ENCODE measurements at regions of chr13 and their contacts with region 1.

Region 1: GRCh38 chr13:46553886-46554858 is 1.2 kb downstream of the LRCH1 start:
- DNase-seq: peak; percentile 75 to 92 (median 86)
- H3K4me3 ChIP-seq: peak overlapping the region; percentile 72 to 89 (median 73)
- H3K27ac ChIP-seq: peak overlapping the region; percentile 96 to 97
- H3K4me1 ChIP-seq: peaks cover 0 to 10% (median 3%) of the 10 kb centered on the region in 3 donors
- H3K27me3 ChIP-seq: no peaks in the 10 kb centered on the region
- CTCF ChIP-seq: no peak

Region 2: DNA sequence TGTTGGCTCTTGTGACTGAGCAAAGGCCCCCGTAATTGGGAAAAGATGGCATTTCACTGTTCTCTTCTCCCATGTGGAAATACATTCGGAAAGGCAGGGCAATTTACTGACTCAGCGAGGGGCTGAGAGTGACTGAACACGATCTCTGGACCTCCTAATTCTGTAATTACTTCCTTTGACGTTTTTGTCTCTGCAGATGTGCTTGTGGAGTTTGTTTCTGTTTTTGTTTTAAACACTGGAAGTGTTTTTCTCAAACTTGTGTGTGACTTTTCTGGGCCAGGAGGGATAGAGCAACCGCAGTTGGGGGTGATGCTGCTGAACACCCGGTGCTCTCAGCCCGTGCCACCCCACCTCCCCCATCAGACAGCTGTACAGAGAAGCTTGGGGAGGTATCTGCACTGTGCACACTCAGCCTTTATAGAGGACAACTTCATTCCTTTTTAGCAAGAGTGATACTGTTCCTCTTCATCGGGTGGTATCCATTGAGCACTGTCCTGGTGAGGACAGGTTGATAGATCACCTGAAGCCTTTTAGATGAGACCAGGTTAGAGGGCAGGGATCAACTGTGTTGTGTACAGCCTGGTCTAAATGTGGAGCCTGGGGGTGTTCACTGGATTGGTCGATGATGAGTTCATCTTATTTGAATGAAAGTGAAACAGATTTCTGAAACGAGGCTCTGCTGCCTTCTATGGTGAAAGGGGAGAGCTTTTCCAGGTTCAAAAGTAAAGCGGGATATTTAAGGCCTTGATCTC is 125.4 kb after region 1 on chr13:
- intact Hi-C with region 1: loop called (anchors 10 kb)
- DNase-seq: peak in 1 of 5 donors; percentile 69
- H3K4me3 ChIP-seq: peak overlapping the region in 2 of 3 donors; percentile 60 to 62
- H3K27ac ChIP-seq: peak overlapping the region; percentile 92 to 94
- H3K4me1 ChIP-seq: peaks cover 4 to 40% (median 20%) of the 10 kb centered on the region in 3 donors
- H3K27me3 ChIP-seq: no peaks in the 10 kb centered on the region
- CTCF ChIP-seq: no peak

Region 3: DNA sequence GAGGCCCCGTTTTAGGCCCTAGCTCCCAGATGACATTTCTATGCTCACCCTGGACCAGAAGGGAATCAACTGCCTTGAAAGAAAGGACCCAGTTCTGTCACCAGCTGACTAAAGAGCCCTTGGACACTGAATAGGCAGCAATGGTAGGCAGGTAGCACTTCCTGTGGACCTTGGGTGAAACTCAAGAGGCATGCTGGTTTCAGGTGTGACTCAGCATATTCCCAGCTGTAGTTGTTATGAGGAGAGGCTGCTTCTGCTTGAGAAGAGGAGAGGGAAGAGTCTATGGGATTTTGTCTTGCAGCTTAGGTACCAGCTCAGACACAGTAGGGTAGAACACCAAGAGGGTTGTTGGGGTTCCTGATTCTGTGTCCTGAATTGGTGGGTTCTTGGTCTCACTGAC is 380.6 kb after region 1 on chr13:
- intact Hi-C with region 1: no loop called
- DNase-seq: no peak
- H3K4me3 ChIP-seq: no peak overlapping the region
- H3K27ac ChIP-seq: no peak overlapping the region
- H3K4me1 ChIP-seq: no peaks in the 10 kb centered on the region
- H3K27me3 ChIP-seq: no peaks in the 10 kb centered on the region
- CTCF ChIP-seq: no peak

Measured in kidney (tissue), 22 donors.